ENCODE measurements at regions of chr10 and their contacts with region 1.

Region 1: DNA sequence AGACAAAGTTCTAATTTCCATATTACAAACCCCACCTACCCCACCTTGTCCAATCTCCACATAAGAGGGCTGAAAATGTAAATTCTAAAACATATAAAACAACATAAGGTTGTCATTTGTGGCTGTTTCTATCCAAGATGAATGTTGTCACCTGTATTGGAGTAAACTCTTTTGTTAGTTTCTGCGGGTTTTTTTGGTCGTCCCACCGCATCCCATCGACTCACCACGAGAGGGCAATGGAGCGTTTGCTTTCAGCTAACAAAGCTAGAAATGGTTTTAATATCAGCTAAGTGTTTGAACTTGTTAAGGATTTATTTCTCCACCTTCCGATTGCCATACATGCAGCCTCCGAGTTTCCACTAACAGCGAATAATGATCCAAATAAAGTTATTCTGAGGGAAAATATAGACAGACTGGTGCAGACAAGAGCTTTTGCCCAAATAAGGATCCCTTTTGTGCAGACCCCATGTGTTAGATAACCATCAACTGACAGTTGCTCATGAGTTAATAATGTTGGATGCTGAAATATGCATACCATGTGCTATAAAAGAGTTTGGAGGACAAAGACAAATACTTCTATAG is 137.2 kb downstream of the ARID5B start:
- DNase-seq: peak; percentile 65 to 87
- H3K4me3 ChIP-seq: no peak overlapping the region
- H3K27ac ChIP-seq: peak overlapping the region; percentile 73 to 76
- H3K4me1 ChIP-seq: peaks cover 0 to 80% (median 47%) of the 10 kb centered on the region in 4 donors
- H3K27me3 ChIP-seq: no peaks in the 10 kb centered on the region
- CTCF ChIP-seq: peak; percentile 84 to 91

Region 2: DNA sequence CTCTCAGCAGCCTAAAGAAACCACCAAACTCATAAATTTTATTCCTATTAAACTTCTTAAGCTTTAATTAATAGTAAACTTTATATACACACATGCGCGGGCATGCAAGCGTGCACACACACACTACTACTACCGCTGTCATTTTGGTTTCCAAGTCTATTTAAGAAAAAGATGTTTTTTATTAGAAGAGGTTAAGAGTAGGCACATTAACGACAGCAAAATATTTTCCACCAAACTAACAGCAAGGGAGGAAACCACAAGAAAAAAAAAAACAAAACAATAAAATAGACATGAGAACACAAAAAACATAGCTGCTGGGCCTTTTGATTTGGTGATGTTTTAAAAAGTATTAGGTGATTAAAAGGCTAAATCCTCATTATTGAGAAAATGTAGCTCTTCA is 201.3 kb after region 1 on chr10:
- intact Hi-C with region 1: loop called (anchors 5 kb)
- DNase-seq: no peak
- H3K4me3 ChIP-seq: no peak overlapping the region
- H3K27ac ChIP-seq: peak overlapping the region in 1 of 2 donors; percentile 25
- H3K4me1 ChIP-seq: peaks cover 0 to 33% (median 9%) of the 10 kb centered on the region in 4 donors
- H3K27me3 ChIP-seq: no peaks in the 10 kb centered on the region
- CTCF ChIP-seq: no peak

Measured in tibial artery (tissue), 4 donors.